Dendritic cell treated with granulocyte-macrophage colony-stimulating factor and Interleukin-4, amounts not matched to agents 40 ng/mL and 50 ng/mL, for 4 days (primary cell): ENCODE measurements at regions of chr2 and their contacts with region 1.

Region 1: GRCh38 chr2:239716536-239717318 is 308.4 kb downstream of the NDUFA10 start:
- H3K4me3 Mint-ChIP-seq: no peak overlapping the region
- H3K27ac Mint-ChIP-seq: no peak overlapping the region
- H3K4me1 Mint-ChIP-seq: no peaks in the 10 kb centered on the region
- H3K27me3 Mint-ChIP-seq: peaks cover 1% of the 10 kb centered on the region

Region 2: GRCh38 chr2:239647052-239647819 is 69.5 kb before region 1 on chr2:
- intact Hi-C with region 1: loop called (anchors 2 kb)
- H3K4me3 Mint-ChIP-seq: no peak overlapping the region
- H3K27ac Mint-ChIP-seq: no peak overlapping the region
- H3K4me1 Mint-ChIP-seq: peaks cover 4% of the 10 kb centered on the region
- H3K27me3 Mint-ChIP-seq: peaks cover 31% of the 10 kb centered on the region